ENCODE measurements at regions of chr9 and their contacts with region 1.

Region 1: DNA sequence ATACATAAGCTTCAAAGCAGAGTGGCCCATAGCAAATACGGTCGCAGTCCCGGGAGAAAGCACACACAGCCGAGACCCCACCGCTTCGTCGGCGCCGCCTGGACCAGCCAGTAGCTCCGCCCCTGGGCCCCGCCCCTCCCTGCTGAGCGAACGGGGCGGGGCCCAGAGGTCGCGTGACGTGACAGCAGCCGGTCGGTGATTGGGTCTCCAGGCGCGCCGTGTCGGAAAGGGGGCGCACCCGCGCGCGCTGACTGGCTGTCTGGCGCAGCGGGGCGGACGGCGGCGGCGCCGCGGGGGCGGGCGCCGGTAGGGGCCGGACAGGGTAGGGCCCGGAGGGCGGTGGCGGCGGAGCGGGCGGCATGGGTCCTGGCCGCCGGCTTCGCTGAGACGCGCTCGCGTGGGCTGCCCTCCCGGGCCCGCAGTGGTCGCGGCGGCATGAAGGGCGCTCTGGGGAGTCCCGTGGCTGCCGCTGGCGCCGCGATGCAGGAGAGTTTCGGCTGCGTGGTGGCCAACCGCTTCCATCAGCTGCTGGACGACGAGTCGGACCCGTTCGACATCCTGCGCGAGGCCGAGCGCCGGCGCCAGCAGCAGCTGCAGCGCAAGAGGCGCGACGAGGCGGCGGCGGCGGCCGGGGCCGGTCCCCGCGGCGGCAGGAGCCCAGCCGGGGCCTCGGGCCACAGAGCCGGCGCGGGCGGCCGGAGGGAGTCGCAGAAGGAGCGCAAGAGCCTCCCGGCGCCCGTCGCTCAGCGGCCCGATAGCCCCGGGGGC is at the start of gene HABP4:
- DNase-seq: peak; percentile 97 to 98 (median 97)
- ATAC-seq: peak; percentile 98 to 100 (median 99)
- H3K4me3 ChIP-seq: peak within 1 kb of the TSS; percentile 56 to 72 (median 60)
- H3K27ac ChIP-seq: peak within 1 kb of the TSS in 1 of 3 donors; percentile 61
- H3K4me1 ChIP-seq: peaks cover 0 to 9% (median 3%) of the 10 kb centered on the region in 4 donors
- H3K27me3 ChIP-seq: no peaks in the 10 kb centered on the region
- CTCF ChIP-seq: peak in 2 of 4 donors; percentile 24 to 43
- POLR2A ChIP-seq: peak; percentile 91
- total RNA-seq, gene HABP4: 1.4 to 6.2 (median 4.7) TPM

Region 2: DNA sequence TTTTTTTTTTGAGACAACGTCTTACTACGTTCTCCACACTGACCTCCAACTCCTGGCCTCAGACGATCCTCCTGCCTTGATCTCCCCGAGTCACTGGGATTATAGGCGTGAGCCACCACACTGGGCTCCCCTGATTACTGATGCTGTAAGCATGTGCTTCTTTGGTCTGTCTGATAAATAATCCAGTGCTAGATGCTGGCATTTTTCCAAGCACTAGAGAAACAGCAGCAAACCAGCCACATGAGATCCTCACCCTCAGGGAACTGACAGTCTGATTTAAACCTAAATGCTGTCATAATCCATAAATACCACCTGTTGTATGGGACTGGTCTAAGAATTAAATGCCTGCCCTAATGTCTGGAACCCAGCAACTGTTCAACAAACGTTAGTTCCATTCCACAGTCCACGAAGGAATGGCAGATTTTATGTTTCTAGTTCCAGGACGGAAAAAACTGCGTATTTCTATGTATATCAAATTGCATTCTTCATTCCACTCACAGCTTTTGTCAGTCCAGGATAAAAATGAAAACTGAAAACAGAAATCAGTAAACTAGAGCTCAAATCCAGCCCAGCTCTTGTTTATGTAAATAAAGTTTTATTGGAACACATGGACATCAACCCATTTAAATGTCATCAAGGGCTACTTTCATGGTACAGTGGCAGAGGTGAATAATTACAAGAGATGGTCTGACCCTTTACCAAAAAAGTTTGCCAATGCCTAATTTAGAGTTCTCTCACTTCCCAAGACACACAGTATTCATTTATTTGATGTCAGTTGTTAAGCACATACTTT is 86.7 kb before region 1 on chr9:
- intact Hi-C with region 1: no loop called
- DNase-seq: no peak
- ATAC-seq: no peak
- H3K4me3 ChIP-seq: no peak overlapping the region
- H3K27ac ChIP-seq: no peak overlapping the region
- H3K4me1 ChIP-seq: peaks cover 0 to 21% (median 0%) of the 10 kb centered on the region in 4 donors
- H3K27me3 ChIP-seq: no peaks in the 10 kb centered on the region
- CTCF ChIP-seq: no peak
- POLR2A ChIP-seq: no peak

Region 3: DNA sequence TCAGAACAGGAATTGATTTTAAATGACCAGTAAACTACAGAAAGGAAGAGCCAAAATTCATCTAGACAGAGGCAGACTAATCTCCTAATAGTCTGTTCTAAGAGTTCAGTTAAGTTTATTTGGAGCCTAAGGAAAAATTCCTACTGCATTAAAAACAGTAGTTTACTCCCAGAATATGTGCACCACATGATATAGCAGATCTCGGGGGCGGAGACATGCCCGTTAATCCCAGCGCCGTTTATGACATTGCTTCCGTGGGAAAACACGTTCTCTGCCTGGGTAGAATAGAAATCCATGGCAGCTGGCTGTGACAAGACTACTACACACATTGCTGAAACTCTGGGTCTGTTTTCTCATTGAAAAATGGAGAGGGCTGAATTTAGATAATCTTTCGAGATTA is 11.3 kb after region 1 on chr9:
- intact Hi-C with region 1: no loop called
- DNase-seq: no peak
- ATAC-seq: no peak
- H3K4me3 ChIP-seq: no peak overlapping the region
- H3K27ac ChIP-seq: no peak overlapping the region
- H3K4me1 ChIP-seq: no peaks in the 10 kb centered on the region
- H3K27me3 ChIP-seq: no peaks in the 10 kb centered on the region
- CTCF ChIP-seq: no peak
- POLR2A ChIP-seq: no peak

Region 4: DNA sequence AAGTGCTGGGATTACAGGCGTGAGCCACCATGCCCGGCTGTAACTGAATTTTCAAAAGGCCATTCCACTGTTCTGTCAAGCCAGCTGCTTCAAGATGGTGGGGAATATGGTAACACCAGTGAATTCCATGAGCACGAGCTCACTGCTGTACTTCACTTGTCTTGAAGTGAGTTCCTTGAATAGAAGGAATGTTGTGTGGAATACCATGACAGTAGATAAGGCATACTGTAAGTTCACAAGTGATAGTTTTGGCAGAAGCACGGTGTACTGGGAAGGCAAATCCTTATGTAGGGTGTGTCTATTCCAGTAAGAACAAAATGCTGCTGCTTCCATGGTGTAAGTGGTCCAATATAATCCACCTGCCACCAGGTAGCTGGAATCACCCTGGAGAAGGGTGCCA is 211.7 kb after region 1 on chr9:
- intact Hi-C with region 1: loop called in 1 of 2 experiments (anchors 10 kb)
- DNase-seq: no peak
- ATAC-seq: no peak
- H3K4me3 ChIP-seq: no peak overlapping the region
- H3K27ac ChIP-seq: no peak overlapping the region
- H3K4me1 ChIP-seq: no peaks in the 10 kb centered on the region
- H3K27me3 ChIP-seq: no peaks in the 10 kb centered on the region
- CTCF ChIP-seq: no peak
- POLR2A ChIP-seq: no peak

Measured in right lobe of liver (tissue), 6 donors.